HEK293 (cell line): ENCODE measurements at regions of chr3 and their contacts with region 1.

Region 1: GRCh38 chr3:171614318-171614921 is 154.2 kb upstream of the TNIK start:
- H3K4me3 ChIP-seq: no peak overlapping the region
- H3K27ac ChIP-seq: no peak overlapping the region
- H3K4me1 ChIP-seq: no peaks in the 10 kb centered on the region
- CTCF ChIP-seq: no peak

Region 2: GRCh38 chr3:171600030-171600429 is 14.4 kb before region 1 on chr3:
- CTCF ChIA-PET with region 1: interaction called, 12 read pairs
- POLR2A ChIA-PET with region 1: interaction called, 5 read pairs
- H3K4me3 ChIP-seq: no peak overlapping the region
- H3K27ac ChIP-seq: no peak overlapping the region
- H3K4me1 ChIP-seq: no peaks in the 10 kb centered on the region
- CTCF ChIP-seq: no peak

Region 3: GRCh38 chr3:172009803-172010202 is 395.4 kb after region 1 on chr3:
- CTCF ChIA-PET with region 1: no interaction called
- POLR2A ChIA-PET with region 1: no interaction called
- H3K4me3 ChIP-seq: no peak overlapping the region
- H3K27ac ChIP-seq: no peak overlapping the region
- H3K4me1 ChIP-seq: no peaks in the 10 kb centered on the region
- CTCF ChIP-seq: no peak